ENCODE measurements at regions of chrX and their contacts with region 1.

Region 1: GRCh38 chrX:123878252-123878721 is 18.4 kb downstream of the XIAP start:
- DNase-seq: no peak
- H3K4me3 Mint-ChIP-seq: no peak overlapping the region
- H3K27ac Mint-ChIP-seq: no peak overlapping the region
- H3K4me1 Mint-ChIP-seq: peaks cover 34% of the 10 kb centered on the region
- H3K27me3 Mint-ChIP-seq: no peaks in the 10 kb centered on the region

Region 2: DNA sequence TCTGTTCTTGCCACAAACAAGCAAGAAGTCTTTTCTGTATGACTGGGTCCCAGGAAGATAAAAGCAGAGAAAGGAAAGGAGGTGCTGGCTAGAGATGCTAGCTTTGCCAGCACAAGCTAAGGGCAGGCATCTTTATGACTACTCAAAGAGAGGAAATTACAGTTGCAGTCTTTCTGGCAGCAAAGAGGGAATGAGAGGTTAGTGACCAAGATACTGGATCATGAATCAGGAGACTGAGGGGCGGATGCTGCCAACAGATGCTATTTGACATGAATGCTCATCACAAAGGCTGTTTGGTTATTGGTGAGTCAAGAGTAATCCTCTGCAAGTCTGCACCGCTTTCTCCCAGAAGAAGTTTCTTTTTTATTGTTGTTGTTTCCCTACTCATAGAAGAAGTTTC is 24.0 kb before region 1 on chrX:
- CTCF ChIA-PET with region 1: no interaction called
- intact Hi-C with region 1: loop called (anchors 1 kb)
- DNase-seq: peak; percentile 13
- H3K4me3 Mint-ChIP-seq: no peak overlapping the region
- H3K27ac Mint-ChIP-seq: no peak overlapping the region
- H3K4me1 Mint-ChIP-seq: peaks cover 13% of the 10 kb centered on the region
- H3K27me3 Mint-ChIP-seq: peaks cover 2% of the 10 kb centered on the region

Region 3: DNA sequence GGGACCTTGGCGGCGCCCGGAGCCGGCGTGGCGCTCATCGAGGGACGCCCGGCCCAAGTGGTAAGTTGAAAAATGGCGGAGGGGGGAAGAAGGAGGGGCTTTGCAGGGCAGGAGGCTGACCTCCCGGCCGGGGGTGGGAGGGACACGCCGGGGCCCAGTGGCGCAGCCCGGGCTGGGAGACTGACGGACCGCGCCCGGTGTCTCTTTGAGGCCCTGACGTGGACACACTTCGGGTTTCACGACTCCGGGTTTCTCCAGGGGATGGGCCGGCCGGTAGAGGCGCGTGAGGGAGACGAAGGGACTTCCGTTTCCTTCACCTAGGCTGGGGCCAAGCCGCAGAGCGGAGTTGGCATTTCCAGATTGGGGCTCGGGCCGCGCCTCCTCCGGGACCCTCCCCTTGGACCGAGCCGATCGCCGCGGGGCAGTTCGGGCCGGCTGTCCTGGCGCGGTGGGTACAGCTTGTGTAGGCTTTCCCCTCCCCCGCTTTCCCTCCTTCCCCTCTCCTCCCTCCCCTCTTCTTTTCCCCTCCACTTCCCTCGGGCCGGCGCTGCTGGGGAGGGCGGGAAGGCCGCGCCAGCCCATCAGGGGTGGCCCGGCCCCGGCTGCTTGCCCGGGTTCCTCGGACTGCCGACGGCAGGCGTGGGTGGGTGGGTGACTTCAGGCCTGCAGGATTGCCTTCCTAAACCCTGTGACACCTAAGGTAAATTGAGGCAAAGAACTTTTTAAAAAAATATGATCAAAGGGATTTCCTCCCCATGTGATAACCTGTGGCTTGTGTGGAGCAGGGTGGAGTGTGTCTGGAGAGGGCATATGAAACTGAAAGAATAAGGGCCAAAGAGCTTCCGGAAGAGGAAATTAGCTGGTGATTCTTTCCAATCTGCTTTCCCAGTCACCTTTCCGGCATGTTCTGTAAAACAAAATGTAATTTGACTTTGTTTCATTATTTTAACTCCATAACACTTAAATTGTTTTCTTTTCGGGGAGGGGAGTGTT is 18.1 kb before region 1 on chrX and contains the start of gene XIAP:
- CTCF ChIA-PET with region 1: no interaction called
- intact Hi-C with region 1: loop called (anchors 2 kb)
- DNase-seq: peak; percentile 70
- H3K4me3 Mint-ChIP-seq: peak within 1 kb of the TSS; percentile 79
- H3K27ac Mint-ChIP-seq: peak within 1 kb of the TSS; percentile 92
- H3K4me1 Mint-ChIP-seq: peaks cover 11% of the 10 kb centered on the region
- H3K27me3 Mint-ChIP-seq: peaks cover 2% of the 10 kb centered on the region
- total RNA-seq, gene XIAP: 24.0 to 24.5 TPM

Region 4: GRCh38 chrX:124151195-124151594 is 272.9 kb after region 1 on chrX:
- CTCF ChIA-PET with region 1: no interaction called
- intact Hi-C with region 1: no loop called
- DNase-seq: no peak
- H3K4me3 Mint-ChIP-seq: no peak overlapping the region
- H3K27ac Mint-ChIP-seq: no peak overlapping the region
- H3K4me1 Mint-ChIP-seq: no peaks in the 10 kb centered on the region
- H3K27me3 Mint-ChIP-seq: no peaks in the 10 kb centered on the region

Measured in activated naive CD4-positive, alpha-beta T cell treated with anti-CD3 and anti-CD28 coated beads for 36 hours (primary cell).